CD14-positive monocyte (primary cell): ENCODE measurements at regions of chrX and their contacts with region 1.

Region 1: GRCh38 chrX:48801280-48802088 is at the start of gene HDAC6:
- DNase-seq: peak; percentile 95 to 98 (median 97)
- H3K4me3 ChIP-seq: peak within 1 kb of the TSS; percentile 61 to 81 (median 79)
- H3K4me3 Mint-ChIP-seq: peak within 1 kb of the TSS; percentile 93 to 96
- H3K27ac ChIP-seq: peak within 1 kb of the TSS; percentile 94 to 98
- H3K27ac Mint-ChIP-seq: peak within 1 kb of the TSS; percentile 98 to 99 (median 99)
- H3K4me1 ChIP-seq: peaks cover 16 to 19% of the 10 kb centered on the region in 2 donors
- H3K4me1 Mint-ChIP-seq: peaks cover 13% of the 10 kb centered on the region
- H3K27me3 ChIP-seq: no peaks in the 10 kb centered on the region
- H3K27me3 Mint-ChIP-seq: peaks cover 0 to 8% (median 0%) of the 10 kb centered on the region in 3 donors
- CTCF ChIP-seq: no peak
- polyA plus RNA-seq, gene HDAC6: 12.7 to 67.0 (median 19.7) TPM

Region 2: GRCh38 chrX:48487362-48487785 is 314.1 kb before region 1 on chrX:
- intact Hi-C with region 1: loop called in 1 of 2 experiments (anchors 10 kb)
- DNase-seq: peak; percentile 72 to 82 (median 77)
- H3K4me3 ChIP-seq: no peak overlapping the region
- H3K4me3 Mint-ChIP-seq: no peak overlapping the region
- H3K27ac ChIP-seq: peak overlapping the region in 1 of 2 donors; percentile 79
- H3K27ac Mint-ChIP-seq: peak overlapping the region; percentile 64 to 86 (median 81)
- H3K4me1 ChIP-seq: peaks cover 7% of the 10 kb centered on the region in 2 donors
- H3K4me1 Mint-ChIP-seq: peaks cover 13% of the 10 kb centered on the region
- H3K27me3 ChIP-seq: no peaks in the 10 kb centered on the region
- H3K27me3 Mint-ChIP-seq: peaks cover 0 to 5% (median 0%) of the 10 kb centered on the region in 3 donors
- CTCF ChIP-seq: no peak

Region 3: DNA sequence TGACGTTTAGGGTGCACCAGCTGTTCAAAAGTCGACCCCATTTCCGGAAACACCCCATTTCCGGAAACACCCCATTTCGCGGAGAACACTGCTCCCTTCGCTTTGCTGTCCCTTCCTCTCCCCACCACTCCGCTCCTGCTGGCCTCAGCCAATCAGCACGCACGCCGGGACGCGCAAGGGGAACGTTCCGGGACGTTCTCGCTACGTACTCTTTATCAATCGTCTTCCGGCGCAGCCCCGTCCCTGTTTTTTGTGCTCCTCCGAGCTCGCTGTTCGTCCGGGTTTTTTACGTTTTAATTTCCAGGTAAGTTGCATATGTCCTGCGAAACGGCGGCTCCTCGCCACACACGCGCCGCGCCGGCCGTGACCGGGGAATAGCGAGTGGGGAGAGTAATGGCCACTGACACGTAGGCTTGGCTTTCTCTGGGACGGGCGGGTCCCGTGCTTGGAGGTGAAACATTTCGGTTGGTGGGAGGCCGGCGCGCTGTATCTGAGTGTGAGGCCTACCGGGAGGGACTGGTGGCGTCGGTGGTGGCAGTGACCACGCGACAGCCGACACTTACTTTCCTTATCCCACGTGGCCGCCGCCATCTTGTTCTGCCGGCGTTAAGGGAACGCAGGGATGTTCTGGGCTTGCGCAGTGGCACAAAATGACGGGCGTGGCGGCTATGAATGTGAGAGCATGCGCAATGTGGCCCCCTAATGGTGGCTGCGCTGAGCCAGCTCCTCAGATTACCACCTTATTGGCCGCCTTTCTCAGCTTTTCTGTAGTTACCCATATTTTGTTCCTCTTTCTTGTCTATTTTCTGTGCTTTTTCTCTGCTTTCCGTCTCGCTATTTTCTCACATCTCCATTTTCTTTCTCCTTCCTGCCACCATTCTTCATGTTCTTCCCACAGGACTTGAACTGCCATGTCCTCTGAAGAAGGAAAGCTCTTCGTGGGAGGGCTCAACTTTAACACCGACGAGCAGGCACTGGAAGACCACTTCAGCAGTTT is 226.9 kb before region 1 on chrX and contains the start of gene RBM3:
- intact Hi-C with region 1: loop called in 1 of 2 experiments (anchors 10 kb)
- DNase-seq: peak; percentile 89 to 96 (median 95)
- H3K4me3 ChIP-seq: peak within 1 kb of the TSS; percentile 58 to 91 (median 82)
- H3K4me3 Mint-ChIP-seq: peak within 1 kb of the TSS; percentile 92 to 96
- H3K27ac ChIP-seq: peak within 1 kb of the TSS; percentile 99 to 100
- H3K27ac Mint-ChIP-seq: peak within 1 kb of the TSS; percentile 97 to 100 (median 100)
- H3K4me1 ChIP-seq: peaks cover 14 to 20% of the 10 kb centered on the region in 2 donors
- H3K4me1 Mint-ChIP-seq: peaks cover 16% of the 10 kb centered on the region
- H3K27me3 ChIP-seq: no peaks in the 10 kb centered on the region
- H3K27me3 Mint-ChIP-seq: peaks cover 0 to 3% (median 0%) of the 10 kb centered on the region in 3 donors
- CTCF ChIP-seq: peak; percentile 23
- polyA plus RNA-seq, gene RBM3: 187 to 302 (median 203) TPM

Region 4: DNA sequence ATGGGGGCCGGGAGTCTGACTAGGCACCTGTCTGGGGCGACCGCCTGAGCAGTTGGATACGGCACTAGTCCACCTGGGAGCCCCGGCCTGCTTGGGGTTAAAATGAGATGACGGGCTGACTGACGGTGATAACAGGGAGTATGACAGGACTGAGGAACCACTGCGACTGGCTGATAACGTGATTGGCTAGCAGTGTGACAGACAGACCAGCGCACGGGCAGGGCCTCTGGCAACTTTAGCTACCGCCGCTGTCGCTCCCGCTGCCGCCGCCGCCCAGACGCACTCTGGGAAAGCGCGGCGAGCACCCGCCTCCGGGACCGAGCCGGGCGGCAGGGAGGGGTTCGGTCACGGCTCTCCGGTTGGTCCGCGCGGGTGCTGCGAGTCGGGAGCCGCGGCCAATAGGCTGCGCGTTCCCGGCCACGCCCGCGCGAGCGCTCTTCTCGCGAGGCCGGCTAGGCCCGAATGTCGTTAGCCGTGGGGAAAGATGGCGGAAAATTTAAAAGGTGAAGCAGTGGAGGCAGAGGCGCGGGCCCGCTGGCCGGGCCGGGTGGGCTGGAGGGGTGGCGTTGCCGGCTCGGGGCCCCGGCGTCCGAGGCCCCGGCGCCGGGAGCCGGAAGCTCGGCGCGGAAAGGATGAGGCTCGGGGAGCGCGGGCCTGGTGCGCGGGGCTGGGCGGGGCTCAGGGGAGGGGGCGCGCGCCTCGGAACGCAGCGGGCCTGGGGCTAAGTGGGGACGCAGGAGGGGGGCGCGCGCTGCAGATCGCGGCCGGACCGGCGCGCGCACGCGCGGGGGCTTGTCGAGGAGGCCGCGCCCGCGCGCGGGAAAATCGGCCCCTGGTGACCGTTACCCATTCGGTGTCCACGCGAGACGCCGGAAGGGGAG is 104.9 kb before region 1 on chrX and contains the start of gene SUV39H1:
- intact Hi-C with region 1: loop called (anchors 10 kb)
- DNase-seq: peak; percentile 85 to 88 (median 88)
- H3K4me3 ChIP-seq: peak within 1 kb of the TSS; percentile 48 to 76 (median 63)
- H3K4me3 Mint-ChIP-seq: peak within 1 kb of the TSS; percentile 82 to 94
- H3K27ac ChIP-seq: peak within 1 kb of the TSS; percentile 95 to 96
- H3K27ac Mint-ChIP-seq: peak within 1 kb of the TSS; percentile 95 to 100 (median 97)
- H3K4me1 ChIP-seq: peaks cover 34 to 37% of the 10 kb centered on the region in 2 donors
- H3K4me1 Mint-ChIP-seq: peaks cover 45% of the 10 kb centered on the region
- H3K27me3 ChIP-seq: no peaks in the 10 kb centered on the region
- H3K27me3 Mint-ChIP-seq: peaks cover 0 to 6% (median 1%) of the 10 kb centered on the region in 3 donors
- CTCF ChIP-seq: no peak
- polyA plus RNA-seq, gene SUV39H1: 2.8 to 3.4 (median 2.9) TPM

Region 5: DNA sequence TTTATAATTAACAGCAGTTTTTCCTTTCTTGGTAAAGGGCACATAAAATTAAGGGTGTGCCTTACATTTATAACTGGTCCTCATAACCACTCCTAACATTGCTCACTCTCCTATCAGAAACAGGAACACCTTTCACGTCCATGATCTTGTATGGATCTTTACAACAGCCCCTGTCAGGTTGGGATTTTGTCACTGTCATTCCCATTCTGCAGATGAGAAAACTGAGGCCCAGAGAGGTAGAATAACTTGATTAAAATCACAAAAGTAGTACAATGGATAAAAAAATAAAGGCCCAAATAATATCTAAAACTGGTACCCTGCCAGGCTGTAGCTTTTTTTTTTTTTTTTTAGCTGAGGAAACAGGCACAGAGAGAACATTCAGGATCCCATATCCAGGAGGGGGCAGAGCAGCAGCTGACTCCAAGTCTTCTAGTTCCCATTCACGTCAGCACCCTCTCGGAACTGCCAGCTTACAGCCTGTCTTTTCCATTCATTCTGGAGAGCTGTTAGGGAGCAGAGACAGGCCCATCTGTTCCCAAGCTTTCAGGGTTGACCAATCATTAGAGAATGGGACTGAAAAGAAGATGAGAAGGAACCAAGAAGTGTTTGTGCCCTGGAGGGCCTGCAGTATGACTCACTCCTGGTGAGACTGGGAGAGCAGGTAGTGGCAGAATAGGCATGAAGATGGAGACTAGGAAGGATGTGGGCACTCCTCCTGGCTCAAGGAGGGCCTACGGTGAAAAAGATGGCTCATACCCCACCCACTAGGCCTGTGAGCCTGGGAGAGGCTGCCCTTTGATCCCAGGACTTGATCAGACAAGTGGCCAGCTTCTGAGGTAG is 97.6 kb before region 1 on chrX:
- intact Hi-C with region 1: loop called (anchors 10 kb)
- DNase-seq: no peak
- H3K4me3 ChIP-seq: no peak overlapping the region
- H3K4me3 Mint-ChIP-seq: no peak overlapping the region
- H3K27ac ChIP-seq: peak overlapping the region in 1 of 2 donors; percentile 31
- H3K27ac Mint-ChIP-seq: peak overlapping the region in 1 of 7 donors; percentile 60
- H3K4me1 ChIP-seq: no peaks in the 10 kb centered on the region
- H3K4me1 Mint-ChIP-seq: peaks cover 5% of the 10 kb centered on the region
- H3K27me3 ChIP-seq: no peaks in the 10 kb centered on the region
- H3K27me3 Mint-ChIP-seq: peaks cover 0 to 6% (median 0%) of the 10 kb centered on the region in 3 donors
- CTCF ChIP-seq: no peak

Region 6: GRCh38 chrX:48737213-48737938 is 64.1 kb before region 1 on chrX:
- intact Hi-C with region 1: loop called (anchors 5 to 10 kb)
- DNase-seq: peak; percentile 93 to 96 (median 95)
- H3K4me3 ChIP-seq: peak overlapping the region; percentile 65 to 77 (median 68)
- H3K4me3 Mint-ChIP-seq: peak overlapping the region; percentile 77 to 95
- H3K27ac ChIP-seq: peak overlapping the region; percentile 86 to 91
- H3K27ac Mint-ChIP-seq: peak overlapping the region; percentile 89 to 96 (median 93)
- H3K4me1 ChIP-seq: peaks cover 7 to 11% of the 10 kb centered on the region in 2 donors
- H3K4me1 Mint-ChIP-seq: peaks cover 16% of the 10 kb centered on the region
- H3K27me3 ChIP-seq: no peaks in the 10 kb centered on the region
- H3K27me3 Mint-ChIP-seq: peaks cover 0 to 7% (median 1%) of the 10 kb centered on the region in 3 donors
- CTCF ChIP-seq: no peak

Region 7: DNA sequence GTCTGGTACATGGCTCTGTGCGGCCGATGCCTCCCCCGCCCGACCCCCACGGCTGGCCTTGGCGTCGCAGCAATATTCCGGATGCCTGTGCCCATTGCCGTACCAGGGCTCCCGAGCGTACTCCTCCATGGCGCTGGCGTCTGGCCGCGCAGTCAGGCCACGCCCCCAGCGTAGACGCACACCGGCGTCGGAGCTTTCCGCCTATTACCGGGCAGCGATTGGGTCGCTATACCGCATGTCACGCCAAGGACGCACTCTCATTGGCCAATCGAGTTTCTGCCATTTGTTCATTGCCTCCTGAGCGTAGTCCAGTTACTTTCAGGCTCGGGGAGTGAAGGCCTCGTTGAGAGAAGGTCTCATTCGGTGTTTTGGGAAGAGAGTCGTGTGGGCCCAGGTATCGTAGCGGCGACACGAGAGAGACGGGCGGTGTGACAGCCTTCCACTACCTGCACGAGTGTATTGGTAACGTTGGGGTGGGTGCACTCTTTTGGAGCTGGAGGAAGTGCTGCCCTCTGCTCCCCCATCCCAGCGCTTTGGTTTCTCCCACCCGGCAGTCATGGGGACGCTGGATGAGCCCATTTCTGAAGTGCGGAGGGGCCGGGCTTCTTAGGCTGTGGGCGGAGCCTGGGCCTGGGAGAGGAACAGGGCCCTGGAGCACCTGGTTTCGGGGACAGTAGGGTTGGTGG is 96.3 kb after region 1 on chrX and contains the starts of genes PQBP1 and TIMM17B:
- intact Hi-C with region 1: loop called (anchors 5 kb)
- DNase-seq: peak; percentile 93 to 94 (median 93)
- H3K4me3 ChIP-seq: peak within 1 kb of the TSS; percentile 81 to 98 (median 88)
- H3K4me3 Mint-ChIP-seq: peak within 1 kb of the TSS; percentile 87 to 96
- H3K27ac ChIP-seq: peak within 1 kb of the TSS; percentile 98 to 100
- H3K27ac Mint-ChIP-seq: peak within 1 kb of the TSS; percentile 94 to 100 (median 98)
- H3K4me1 ChIP-seq: peaks cover 19 to 23% of the 10 kb centered on the region in 2 donors
- H3K4me1 Mint-ChIP-seq: peaks cover 15% of the 10 kb centered on the region
- H3K27me3 ChIP-seq: no peaks in the 10 kb centered on the region
- H3K27me3 Mint-ChIP-seq: peaks cover 0 to 6% (median 0%) of the 10 kb centered on the region in 3 donors
- CTCF ChIP-seq: no peak
- polyA plus RNA-seq, gene PQBP1: 71.7 to 129 (median 78.3) TPM
- polyA plus RNA-seq, gene TIMM17B: 52.2 to 86.9 (median 86.8) TPM

Region 8: GRCh38 chrX:48996969-48997368 is 195.5 kb after region 1 on chrX:
- intact Hi-C with region 1: no loop called
- DNase-seq: no peak
- H3K4me3 ChIP-seq: no peak overlapping the region
- H3K4me3 Mint-ChIP-seq: no peak overlapping the region
- H3K27ac ChIP-seq: no peak overlapping the region
- H3K27ac Mint-ChIP-seq: peak overlapping the region in 1 of 7 donors; percentile 41
- H3K4me1 ChIP-seq: peaks cover 9 to 10% of the 10 kb centered on the region in 2 donors
- H3K4me1 Mint-ChIP-seq: peaks cover 20% of the 10 kb centered on the region
- H3K27me3 ChIP-seq: no peaks in the 10 kb centered on the region
- H3K27me3 Mint-ChIP-seq: peaks cover 0 to 7% (median 0%) of the 10 kb centered on the region in 3 donors
- CTCF ChIP-seq: no peak